Activated B cell treated with CpG ODN at 0.5 μM for 24 hours (primary cell): ENCODE measurements at regions of chr6 and their contacts with region 1.

Region 1: DNA sequence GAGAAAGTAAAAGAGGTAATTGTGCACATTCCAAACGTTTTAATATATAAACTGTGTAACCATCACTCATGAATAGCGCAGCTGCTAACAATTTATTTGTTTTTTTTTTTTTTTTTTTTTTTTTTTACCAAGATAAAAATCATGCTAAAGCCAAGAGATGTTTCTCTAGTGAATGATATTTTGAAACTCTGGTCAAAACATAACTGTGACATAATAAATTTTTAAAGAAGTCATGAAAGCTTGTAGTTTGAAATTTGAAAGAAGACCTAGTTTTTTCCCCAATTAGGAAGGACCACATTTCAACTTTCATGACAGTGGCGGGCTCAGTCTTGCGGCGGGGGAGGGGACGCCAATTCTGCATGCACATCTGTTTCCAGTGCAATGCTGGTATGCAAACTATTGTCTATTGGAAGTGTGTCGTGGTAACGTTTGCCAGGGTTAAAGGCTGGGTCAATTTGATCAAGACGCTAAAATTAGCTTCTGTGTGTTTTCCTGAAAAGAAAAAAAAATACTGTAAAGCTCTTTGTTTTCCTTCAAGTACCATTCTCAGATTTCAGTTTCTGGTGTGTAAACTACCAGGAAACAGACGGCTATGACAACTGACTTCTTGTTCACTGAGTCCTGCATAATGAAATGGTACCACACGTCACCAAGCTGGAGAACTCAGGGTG is 211.9 kb downstream of the FOXC1 start:
- DNase-seq: no peak
- ATAC-seq: no peak
- H3K4me3 Mint-ChIP-seq: no peak overlapping the region
- H3K27ac Mint-ChIP-seq: no peak overlapping the region
- H3K4me1 Mint-ChIP-seq: peaks cover 23% of the 10 kb centered on the region
- H3K27me3 Mint-ChIP-seq: no peaks in the 10 kb centered on the region
- CTCF ChIP-seq: no peak

Region 2: GRCh38 chr6:1864496-1864895 is 42.8 kb after region 1 on chr6:
- CTCF ChIA-PET with region 1: no interaction called
- POLR2A ChIA-PET with region 1: no interaction called
- intact Hi-C with region 1: no loop called
- DNase-seq: no peak
- ATAC-seq: no peak
- H3K4me3 Mint-ChIP-seq: no peak overlapping the region
- H3K27ac Mint-ChIP-seq: no peak overlapping the region
- H3K4me1 Mint-ChIP-seq: peaks cover 35% of the 10 kb centered on the region
- H3K27me3 Mint-ChIP-seq: no peaks in the 10 kb centered on the region
- CTCF ChIP-seq: no peak

Region 3: GRCh38 chr6:1885576-1886011 is 63.9 kb after region 1 on chr6:
- CTCF ChIA-PET with region 1: no interaction called
- POLR2A ChIA-PET with region 1: no interaction called
- intact Hi-C with region 1: loop called (anchors 5 kb)
- DNase-seq: no peak
- ATAC-seq: no peak
- H3K4me3 Mint-ChIP-seq: no peak overlapping the region
- H3K27ac Mint-ChIP-seq: no peak overlapping the region
- H3K4me1 Mint-ChIP-seq: peaks cover 7% of the 10 kb centered on the region
- H3K27me3 Mint-ChIP-seq: no peaks in the 10 kb centered on the region
- CTCF ChIP-seq: no peak

Region 4: DNA sequence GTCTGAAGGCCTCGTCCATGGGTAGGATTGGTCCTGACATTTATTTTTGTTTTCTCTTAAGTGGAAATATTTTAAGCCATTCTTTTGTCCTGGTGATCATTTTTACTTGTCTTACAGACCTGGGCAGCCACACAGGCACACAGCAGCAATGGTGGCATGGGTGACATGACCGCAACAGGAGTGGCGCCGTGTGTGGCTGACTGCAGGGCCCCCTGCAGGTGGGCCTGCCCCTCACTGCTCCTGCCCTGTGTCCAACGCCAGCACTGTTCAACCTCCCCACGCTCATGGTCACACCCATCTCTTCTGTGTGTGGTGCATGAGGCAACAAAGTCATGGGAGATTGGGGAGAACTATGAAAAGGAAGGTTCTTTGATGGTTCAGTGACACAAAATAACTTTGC is 777.2 kb after region 1 on chr6:
- CTCF ChIA-PET with region 1: no interaction called
- POLR2A ChIA-PET with region 1: no interaction called
- intact Hi-C with region 1: no loop called
- DNase-seq: no peak
- ATAC-seq: no peak
- H3K4me3 Mint-ChIP-seq: no peak overlapping the region
- H3K27ac Mint-ChIP-seq: no peak overlapping the region
- H3K4me1 Mint-ChIP-seq: no peaks in the 10 kb centered on the region
- H3K27me3 Mint-ChIP-seq: peaks cover 10% of the 10 kb centered on the region
- CTCF ChIP-seq: no peak